Posterior cingulate gyrus (tissue), 11 donors: ENCODE measurements at regions of chr6 and their contacts with region 1.

Region 1: DNA sequence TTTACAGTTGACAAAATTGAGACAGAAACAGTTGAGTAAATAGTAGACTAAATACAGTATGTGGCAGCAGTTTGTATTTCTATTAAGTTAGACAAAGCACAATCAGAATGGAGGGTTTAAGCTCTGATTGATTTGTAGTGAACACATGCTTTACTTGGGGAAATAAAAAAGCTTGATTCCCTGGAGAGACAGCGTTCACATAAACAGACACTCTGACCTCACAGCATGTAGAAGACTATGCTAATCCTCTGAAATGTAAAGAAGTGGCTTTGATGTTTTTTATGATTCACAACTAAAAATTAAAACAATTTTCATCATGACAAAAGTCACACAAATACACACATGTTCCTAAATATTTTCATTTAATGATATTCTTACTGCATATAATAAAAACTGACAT is 126.9 kb upstream of the FAM83B start:
- DNase-seq: no peak

Region 2: DNA sequence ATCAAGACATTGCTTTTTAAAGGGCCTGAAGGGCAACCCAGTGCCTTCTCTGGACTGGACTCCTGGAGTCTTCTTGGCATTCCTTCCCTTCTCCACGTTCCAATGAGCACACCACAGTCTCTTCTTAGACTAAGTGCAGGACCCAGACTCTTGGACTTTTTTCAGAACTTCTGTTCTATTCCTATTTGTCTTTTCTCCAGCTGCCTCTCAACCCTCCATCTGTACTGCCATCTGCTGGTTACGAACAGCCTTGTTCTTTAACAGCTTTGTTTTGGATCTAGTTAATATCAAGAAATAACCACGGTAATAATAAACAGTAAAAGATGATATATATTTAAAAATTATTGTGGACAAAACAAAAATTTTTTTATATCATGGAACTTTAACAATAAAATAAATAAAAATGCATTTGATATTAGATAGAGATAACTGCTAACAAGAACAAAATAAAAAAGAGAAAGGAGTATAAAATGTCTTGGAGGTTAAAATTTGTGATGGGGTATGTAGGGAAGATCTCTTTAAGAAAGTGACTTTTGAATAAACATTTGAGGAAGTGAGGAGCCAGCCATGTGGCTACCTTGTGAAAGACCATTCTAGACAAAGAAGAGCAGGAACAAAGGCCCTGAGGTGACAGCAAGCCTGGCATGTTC is 349.6 kb after region 1 on chr6:
- intact Hi-C with region 1: loop called (anchors 10 kb)
- DNase-seq: peak in 2 of 10 donors; percentile 5 to 12